Calu3 (cell line): ENCODE measurements at regions of chr19 and their contacts with region 1.

Region 1: GRCh38 chr19:10388957-10389356 is 8.6 kb upstream of the TYK2 start:
- DNase-seq: peak; percentile 86
- H3K4me3 Mint-ChIP-seq: no peak overlapping the region
- H3K27ac Mint-ChIP-seq: peak overlapping the region; percentile 66
- H3K4me1 Mint-ChIP-seq: no peaks in the 10 kb centered on the region
- H3K27me3 Mint-ChIP-seq: no peaks in the 10 kb centered on the region
- CTCF ChIP-seq: peak; percentile 82

Region 2: DNA sequence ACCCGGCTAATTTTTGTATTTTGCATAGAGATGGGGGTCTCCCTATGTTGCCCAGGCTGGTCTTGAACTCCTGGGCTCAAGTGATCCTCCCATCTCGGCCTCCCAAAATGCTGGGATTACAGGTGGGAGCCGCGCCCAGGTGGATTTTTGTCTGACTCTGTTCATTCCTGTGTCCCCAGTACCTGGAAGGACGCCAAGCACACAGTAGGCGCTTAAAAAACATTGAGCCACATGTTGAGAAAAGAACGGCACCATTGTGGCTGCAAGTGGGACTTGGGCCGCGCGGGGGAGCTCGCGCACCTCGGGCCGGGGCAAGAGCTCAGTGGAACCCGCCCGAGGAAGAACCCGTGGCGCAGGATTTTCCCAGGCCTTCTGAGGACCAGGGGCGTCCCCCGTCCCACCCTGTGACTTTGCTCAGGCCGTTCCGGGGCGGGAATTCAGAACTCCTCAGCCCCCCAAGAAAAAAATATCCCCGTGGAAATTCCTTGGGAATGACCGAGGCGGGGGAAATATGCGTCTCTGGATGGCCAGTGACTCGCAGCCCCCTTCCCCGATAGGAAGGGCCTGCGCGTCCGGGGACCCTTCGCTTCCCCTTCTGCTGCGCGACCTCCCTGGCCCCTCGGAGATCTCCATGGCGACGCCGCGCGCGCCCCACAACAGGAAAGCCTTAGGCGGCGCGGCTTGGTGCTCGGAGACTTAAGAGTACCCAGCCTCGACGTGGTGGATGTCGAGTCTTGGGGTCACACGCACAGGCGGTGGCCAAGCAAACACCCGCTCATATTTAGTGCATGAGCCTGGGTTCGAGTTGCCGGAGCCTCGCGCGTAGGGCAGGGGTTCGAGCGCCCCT is 119.4 kb before region 1 on chr19:
- CTCF ChIA-PET with region 1: interaction called, 26 read pairs
- intact Hi-C with region 1: loop called (anchors 1 kb)
- DNase-seq: peak; percentile 90
- H3K4me3 Mint-ChIP-seq: peak overlapping the region; percentile 71
- H3K27ac Mint-ChIP-seq: peak overlapping the region; percentile 42
- H3K4me1 Mint-ChIP-seq: peaks cover 18% of the 10 kb centered on the region
- H3K27me3 Mint-ChIP-seq: no peaks in the 10 kb centered on the region
- CTCF ChIP-seq: peak; percentile 62

Region 3: GRCh38 chr19:10424011-10424637 is 35.2 kb after region 1 on chr19:
- CTCF ChIA-PET with region 1: no interaction called
- intact Hi-C with region 1: no loop called
- DNase-seq: peak; percentile 88
- H3K4me3 Mint-ChIP-seq: peak overlapping the region; percentile 62
- H3K27ac Mint-ChIP-seq: no peak overlapping the region
- H3K4me1 Mint-ChIP-seq: peaks cover 9% of the 10 kb centered on the region
- H3K27me3 Mint-ChIP-seq: peaks cover 49% of the 10 kb centered on the region
- CTCF ChIP-seq: peak; percentile 76

Region 4: DNA sequence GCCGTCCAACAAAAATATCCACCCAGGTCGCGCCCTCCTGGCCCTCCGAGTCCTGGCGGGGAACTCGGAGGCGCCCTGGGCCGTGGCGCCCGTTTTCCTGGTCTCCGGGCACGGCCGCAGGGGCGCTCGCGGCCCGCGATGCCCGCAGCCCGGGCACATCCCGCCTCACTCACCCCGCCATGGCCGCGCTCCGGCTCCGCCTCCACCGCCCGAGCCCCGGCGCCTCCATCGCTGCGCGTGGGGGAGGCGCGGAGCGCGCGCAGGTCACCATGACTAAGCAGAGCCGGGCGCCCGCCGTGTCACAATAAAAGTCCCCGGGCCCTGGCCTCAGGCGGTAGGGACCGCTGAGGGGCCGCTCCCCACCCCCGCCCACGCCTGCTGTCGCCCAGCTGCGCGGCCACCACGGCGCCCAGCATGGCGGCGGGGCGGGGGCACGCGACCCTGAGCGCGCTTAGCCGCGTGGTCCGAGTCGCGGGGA is 113.6 kb after region 1 on chr19:
- CTCF ChIA-PET with region 1: no interaction called
- intact Hi-C with region 1: no loop called
- DNase-seq: peak; percentile 90
- H3K4me3 Mint-ChIP-seq: peak overlapping the region; percentile 85
- H3K27ac Mint-ChIP-seq: peak overlapping the region; percentile 82
- H3K4me1 Mint-ChIP-seq: peaks cover 13% of the 10 kb centered on the region
- H3K27me3 Mint-ChIP-seq: no peaks in the 10 kb centered on the region
- CTCF ChIP-seq: no peak